Body of pancreas (tissue), 4 donors: ENCODE measurements at regions of chr5 and their contacts with region 1.

Region 1: DNA sequence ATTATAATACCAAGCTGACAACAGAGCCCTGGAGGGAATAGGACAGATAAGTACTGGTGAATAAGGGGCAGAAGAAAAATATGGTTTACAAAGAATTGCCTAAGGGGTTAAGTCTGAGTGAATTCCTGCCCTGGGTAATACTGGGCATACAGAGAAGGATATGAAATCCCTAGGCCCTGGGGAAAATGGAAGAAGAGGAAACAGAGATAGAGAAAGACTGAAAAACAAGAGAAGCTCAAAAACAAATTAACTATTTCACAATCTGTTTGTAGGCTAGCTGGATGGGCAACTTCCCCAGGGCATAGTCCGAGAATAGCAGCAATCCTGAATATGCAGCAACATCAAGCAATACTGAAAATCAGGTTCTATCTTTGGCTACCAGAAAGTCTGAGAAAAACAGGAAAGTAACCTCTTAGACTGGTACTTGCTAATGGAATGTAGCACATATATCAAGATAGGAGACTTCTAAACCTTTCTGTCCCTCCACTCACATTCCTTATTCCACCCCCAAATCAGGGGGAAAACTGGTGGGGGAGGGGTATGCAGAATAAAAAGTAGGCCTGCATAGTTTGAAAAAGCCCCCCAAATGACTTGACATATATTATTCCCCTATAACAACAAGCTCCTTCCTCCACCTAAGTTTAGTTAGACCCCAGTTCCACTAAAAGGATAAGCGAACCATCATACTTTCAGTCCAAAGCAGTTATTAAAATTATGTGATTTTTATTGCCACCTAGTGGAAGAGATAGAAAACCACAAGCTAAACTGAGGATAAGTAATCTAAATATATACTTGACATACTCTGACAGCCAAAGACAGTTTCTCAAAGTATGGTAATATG is 20.6 kb downstream of the SLC38A9 start:
- DNase-seq: no peak
- ATAC-seq: peak; percentile 60
- H3K4me3 ChIP-seq: no peak overlapping the region
- H3K27ac ChIP-seq: no peak overlapping the region
- H3K4me1 ChIP-seq: peaks cover 14% of the 10 kb centered on the region
- H3K27me3 ChIP-seq: no peaks in the 10 kb centered on the region
- CTCF ChIP-seq: peak in 6 of 7 experiments; percentile 42 to 73 (median 65)
- POLR2A ChIP-seq: no peak

Region 2: DNA sequence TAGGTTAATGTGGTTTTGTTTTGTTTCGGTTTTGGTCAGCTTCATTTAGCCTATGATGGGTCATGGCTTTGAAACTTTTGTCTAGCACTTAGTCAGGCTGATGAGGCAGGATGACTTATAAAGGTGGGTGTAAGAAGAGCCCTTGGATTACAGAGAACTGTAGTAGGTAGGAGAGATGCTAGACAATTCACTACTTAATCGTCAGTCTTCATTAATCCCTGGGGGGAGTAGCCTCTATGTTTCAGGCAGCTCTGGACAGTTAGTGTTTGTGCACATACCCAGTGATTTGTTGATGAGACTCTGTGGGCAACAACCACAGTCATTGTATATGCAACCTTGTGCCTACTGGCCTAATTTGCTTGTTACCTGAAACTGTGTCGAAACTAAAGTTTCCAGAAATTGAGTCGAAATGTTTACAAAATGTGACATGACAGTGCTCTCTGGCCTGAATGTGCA is 270.4 kb before region 1 on chr5:
- intact Hi-C with region 1: loop called (anchors 10 kb)
- DNase-seq: no peak
- ATAC-seq: no peak
- H3K4me3 ChIP-seq: no peak overlapping the region
- H3K27ac ChIP-seq: no peak overlapping the region
- H3K4me1 ChIP-seq: no peaks in the 10 kb centered on the region
- H3K27me3 ChIP-seq: no peaks in the 10 kb centered on the region
- CTCF ChIP-seq: no peak
- POLR2A ChIP-seq: no peak

Region 3: DNA sequence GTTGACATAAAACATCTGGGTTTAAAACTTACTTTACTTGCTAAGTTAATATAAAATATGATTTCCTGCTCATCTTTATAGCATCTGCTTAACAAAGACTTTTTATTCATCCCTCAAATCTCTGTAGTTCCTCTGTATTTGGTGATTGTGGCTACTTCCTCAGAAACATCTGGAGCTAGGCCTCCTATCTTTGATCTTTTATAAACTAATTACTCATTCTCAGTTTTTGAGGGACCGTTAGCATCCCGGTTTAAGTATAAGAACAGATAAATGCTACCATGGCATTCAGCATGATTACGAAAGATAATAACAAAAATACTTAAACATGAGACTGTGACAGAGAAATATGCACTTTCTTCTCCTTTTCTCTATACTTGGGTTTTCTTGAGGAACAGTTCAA is 64.7 kb before region 1 on chr5:
- intact Hi-C with region 1: no loop called
- DNase-seq: no peak
- ATAC-seq: no peak
- H3K4me3 ChIP-seq: no peak overlapping the region
- H3K27ac ChIP-seq: no peak overlapping the region
- H3K4me1 ChIP-seq: peaks cover 2% of the 10 kb centered on the region
- H3K27me3 ChIP-seq: no peaks in the 10 kb centered on the region
- CTCF ChIP-seq: no peak
- POLR2A ChIP-seq: no peak